Activated CD4-positive, alpha-beta memory T cell treated with anti-CD3 and anti-CD28 coated beads for 36 hours (primary cell): ENCODE measurements at regions of chr20 and their contacts with region 1.

Region 1: DNA sequence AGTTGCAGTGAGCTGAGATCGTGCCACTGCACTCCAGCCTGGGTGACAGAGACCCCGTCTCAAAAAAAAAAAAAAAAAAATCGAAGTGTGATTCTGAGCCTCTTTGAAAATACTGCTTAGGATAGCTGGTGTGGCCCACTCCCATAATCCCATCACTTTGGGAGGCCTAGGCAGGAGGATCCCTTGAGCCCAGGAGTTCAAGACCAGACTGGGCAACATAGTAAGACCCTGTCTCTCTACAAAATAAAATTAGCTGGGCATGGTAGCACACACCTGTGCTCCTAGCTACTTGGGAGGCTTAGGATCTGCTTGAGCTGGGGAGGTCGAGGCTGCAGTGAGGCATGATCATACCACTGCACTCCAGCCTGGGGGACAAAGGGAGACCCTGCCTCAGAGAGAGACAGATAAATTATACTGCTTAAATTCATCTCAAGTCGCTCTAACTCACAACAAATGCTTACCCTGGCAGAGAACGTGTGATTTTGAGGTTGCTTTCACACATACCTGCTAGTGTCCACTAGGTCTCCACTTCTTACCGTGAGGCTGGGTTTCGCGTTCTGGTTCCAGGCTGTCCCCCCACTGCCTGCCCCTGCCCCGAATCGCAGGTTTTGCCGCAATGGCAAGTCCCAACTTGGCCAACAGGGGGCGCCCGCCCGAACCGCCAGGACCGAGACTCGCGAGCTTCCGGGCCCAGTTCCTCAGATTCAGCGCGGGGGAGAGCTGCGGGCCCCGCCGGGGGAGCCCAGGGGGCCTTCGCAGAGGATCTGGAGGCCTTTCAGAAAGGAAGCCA is 12.3 kb upstream of the TMC2 start:
- DNase-seq: peak; percentile 94
- H3K4me3 Mint-ChIP-seq: peak overlapping the region; percentile 85
- H3K27ac Mint-ChIP-seq: peak overlapping the region; percentile 85
- H3K4me1 Mint-ChIP-seq: peaks cover 14% of the 10 kb centered on the region
- H3K27me3 Mint-ChIP-seq: no peaks in the 10 kb centered on the region

Region 2: GRCh38 chr20:2206957-2207769 is 317.0 kb before region 1 on chr20:
- CTCF ChIA-PET with region 1: interaction called, 10 read pairs
- POLR2A ChIA-PET with region 1: no interaction called
- intact Hi-C with region 1: no loop called
- DNase-seq: peak; percentile 77
- H3K4me3 Mint-ChIP-seq: peak overlapping the region; percentile 74
- H3K27ac Mint-ChIP-seq: no peak overlapping the region
- H3K4me1 Mint-ChIP-seq: peaks cover 7% of the 10 kb centered on the region
- H3K27me3 Mint-ChIP-seq: peaks cover 7% of the 10 kb centered on the region

Region 3: GRCh38 chr20:2476742-2477615 is 47.1 kb before region 1 on chr20:
- CTCF ChIA-PET with region 1: interaction called, 11 read pairs
- POLR2A ChIA-PET with region 1: no interaction called
- intact Hi-C with region 1: no loop called
- DNase-seq: no peak
- H3K4me3 Mint-ChIP-seq: no peak overlapping the region
- H3K27ac Mint-ChIP-seq: no peak overlapping the region
- H3K4me1 Mint-ChIP-seq: no peaks in the 10 kb centered on the region
- H3K27me3 Mint-ChIP-seq: no peaks in the 10 kb centered on the region

Region 4: DNA sequence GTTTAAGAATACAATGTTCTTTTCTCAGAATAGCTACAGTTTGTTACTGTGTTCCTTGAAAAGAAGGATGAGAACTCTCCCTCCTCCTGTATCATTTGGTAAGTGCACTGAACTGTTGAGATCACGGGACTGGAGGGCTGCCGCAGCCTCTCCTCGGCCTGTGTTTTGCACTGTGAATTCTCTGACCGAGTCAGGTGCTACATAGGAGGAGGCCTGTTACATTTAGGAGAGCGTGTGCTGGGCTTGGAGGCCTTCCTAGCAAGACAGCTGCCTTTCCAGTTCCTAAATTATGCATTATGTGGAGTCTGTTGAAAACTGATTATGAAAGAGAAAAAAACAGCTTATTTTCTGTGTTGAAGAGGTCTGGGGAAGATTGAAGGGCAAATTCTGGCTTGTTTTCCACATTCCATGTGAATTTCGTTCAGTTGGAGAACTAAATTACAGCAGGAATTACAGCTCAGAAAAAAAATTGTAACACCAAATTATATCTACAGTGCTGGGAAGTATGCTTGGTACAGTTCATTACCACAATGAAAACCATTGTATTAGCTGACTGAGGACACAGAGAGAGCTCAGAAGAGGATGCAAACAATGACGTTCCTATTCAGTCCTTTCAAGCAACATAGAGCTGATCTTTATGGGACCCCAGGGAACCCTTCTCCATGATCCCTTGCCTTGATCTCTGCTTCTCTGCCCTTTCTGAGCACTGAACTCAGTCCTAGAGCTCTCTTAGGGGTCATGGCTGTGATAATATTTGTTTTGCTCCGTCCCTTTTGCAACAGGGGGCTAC is 15.0 kb after region 1 on chr20:
- CTCF ChIA-PET with region 1: interaction called, 11 read pairs
- POLR2A ChIA-PET with region 1: no interaction called
- intact Hi-C with region 1: no loop called
- DNase-seq: no peak
- H3K4me3 Mint-ChIP-seq: no peak overlapping the region
- H3K27ac Mint-ChIP-seq: no peak overlapping the region
- H3K4me1 Mint-ChIP-seq: no peaks in the 10 kb centered on the region
- H3K27me3 Mint-ChIP-seq: peaks cover 34% of the 10 kb centered on the region

Region 5: DNA sequence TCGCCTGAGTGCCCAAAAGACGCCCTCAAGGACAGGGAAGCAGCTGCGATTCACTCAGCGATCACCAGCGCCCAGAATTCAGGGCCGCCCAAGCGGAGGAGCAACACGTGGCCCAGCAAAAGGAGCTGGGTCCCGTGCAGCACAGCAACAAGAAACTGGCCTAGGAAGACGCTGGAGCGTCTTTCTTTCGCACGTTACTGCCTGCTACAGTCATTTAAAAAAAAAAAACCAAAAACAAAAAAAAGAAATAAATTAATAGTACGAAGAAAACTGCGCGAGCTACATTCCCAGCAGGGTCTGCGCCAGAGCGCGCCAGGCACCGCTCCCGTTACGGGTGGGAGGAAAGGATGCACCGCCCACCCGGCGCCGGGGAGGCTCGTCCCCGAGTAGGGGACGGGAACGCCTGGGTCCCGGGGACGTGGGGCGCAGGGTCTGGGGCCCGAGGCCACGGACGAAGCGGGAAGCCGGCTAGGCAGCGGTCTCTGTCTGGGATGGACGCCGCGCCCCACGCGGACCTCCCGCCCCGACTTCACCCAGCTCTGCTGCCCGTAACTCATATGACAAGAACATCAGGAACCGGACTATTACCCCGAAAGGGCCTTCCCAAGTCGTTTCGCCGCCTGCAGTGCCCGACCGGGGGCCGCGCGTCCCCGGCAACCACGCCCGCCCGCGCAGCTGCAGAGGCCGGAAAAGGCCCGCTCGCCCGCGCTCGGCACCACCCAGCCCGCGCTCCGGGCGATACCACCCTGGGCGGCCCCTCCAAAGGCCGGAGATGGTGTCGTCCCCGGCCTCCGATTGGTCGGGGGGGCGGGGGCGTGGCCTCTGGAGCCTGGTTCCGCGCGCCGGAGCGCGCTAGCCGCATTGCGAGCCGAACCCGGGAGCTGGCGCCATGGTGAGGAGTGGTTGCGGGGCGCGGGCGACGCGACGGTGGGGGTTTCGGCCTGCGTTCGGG is 127.9 kb after region 1 on chr20 and contains the start of gene NOP56:
- CTCF ChIA-PET with region 1: interaction called, 26 read pairs
- POLR2A ChIA-PET with region 1: interaction called, 14 read pairs
- intact Hi-C with region 1: loop called (anchors 5 kb)
- DNase-seq: peak; percentile 95
- H3K4me3 Mint-ChIP-seq: peak within 1 kb of the TSS; percentile 90
- H3K27ac Mint-ChIP-seq: peak within 1 kb of the TSS; percentile 93
- H3K4me1 Mint-ChIP-seq: peaks cover 49% of the 10 kb centered on the region
- H3K27me3 Mint-ChIP-seq: no peaks in the 10 kb centered on the region
- total RNA-seq, gene NOP56: 402 to 408 TPM